Left lung (tissue), 14 donors: ENCODE measurements at regions of chr14 and their contacts with region 1.

Region 1: DNA sequence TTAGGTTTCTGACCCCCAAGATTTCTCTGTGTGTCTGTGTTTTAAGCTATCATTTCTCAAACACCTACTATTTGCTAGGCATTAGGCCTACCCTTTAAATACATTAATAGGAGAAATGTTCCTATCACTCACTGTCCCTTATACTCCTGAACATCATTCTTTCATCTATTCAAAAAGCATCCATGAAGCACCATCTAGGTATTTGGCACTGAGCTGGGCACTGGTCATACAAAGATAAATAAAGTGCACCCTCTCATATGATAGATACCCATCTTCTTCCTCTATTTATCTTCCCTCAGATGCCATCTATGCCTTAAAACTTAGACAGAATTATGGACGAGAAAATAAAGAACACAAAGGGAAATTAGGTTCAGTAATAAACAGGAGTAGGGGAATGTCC is 20.4 kb downstream of the SIX1 start:
- DNase-seq: no peak
- ATAC-seq: no peak
- H3K4me3 ChIP-seq: no peak overlapping the region
- H3K27ac ChIP-seq: no peak overlapping the region
- H3K4me1 ChIP-seq: peaks cover 0 to 3% of the 10 kb centered on the region in 2 donors
- H3K27me3 ChIP-seq: peaks cover 9 to 35% of the 10 kb centered on the region in 2 donors
- CTCF ChIP-seq: no peak

Region 2: GRCh38 chr14:60590991-60591414 is 37.9 kb before region 1 on chr14:
- intact Hi-C with region 1: no loop called
- DNase-seq: peak in 2 of 4 donors; percentile 3 to 24
- ATAC-seq: peak; percentile 82
- H3K4me3 ChIP-seq: no peak overlapping the region
- H3K27ac ChIP-seq: peak overlapping the region in 1 of 2 donors; percentile 26
- H3K4me1 ChIP-seq: peaks cover 0 to 8% of the 10 kb centered on the region in 2 donors
- H3K27me3 ChIP-seq: no peaks in the 10 kb centered on the region
- CTCF ChIP-seq: no peak

Region 3: DNA sequence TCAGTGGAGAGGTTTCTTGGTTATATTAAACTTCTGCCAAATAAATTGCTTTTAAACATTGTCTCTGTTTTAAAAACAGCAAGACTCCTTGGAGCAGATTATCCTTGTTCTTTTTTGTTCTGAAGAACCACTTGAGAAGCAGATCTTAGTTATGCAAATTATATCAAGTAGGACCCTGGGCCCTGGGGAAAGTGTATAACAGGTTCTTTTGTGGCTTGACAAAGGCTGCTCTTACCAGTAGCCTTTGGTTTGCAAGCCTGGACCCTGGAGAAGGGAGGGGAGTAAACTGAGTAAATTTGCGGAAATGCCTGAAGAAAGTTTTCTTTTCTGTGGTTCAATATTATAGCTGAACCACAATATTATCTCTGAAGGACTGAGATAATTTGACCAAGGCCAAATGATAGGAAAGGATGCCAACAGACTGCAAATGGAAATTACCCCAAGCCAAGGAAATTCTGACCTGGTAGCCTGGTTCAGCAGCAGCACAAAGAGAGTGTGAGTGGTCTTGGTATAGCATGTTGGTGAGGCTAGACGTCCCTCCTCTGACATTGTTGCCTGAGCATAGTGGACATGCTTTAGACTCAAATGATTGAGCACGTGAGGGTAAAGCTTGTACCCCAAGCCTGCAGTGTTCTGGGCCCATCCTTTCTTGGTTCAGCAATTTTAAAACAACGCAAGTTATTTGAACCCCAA is 50.8 kb after region 1 on chr14:
- intact Hi-C with region 1: no loop called
- DNase-seq: no peak
- ATAC-seq: no peak
- H3K4me3 ChIP-seq: no peak overlapping the region
- H3K27ac ChIP-seq: no peak overlapping the region
- H3K4me1 ChIP-seq: no peaks in the 10 kb centered on the region
- H3K27me3 ChIP-seq: no peaks in the 10 kb centered on the region
- CTCF ChIP-seq: no peak

Region 4: DNA sequence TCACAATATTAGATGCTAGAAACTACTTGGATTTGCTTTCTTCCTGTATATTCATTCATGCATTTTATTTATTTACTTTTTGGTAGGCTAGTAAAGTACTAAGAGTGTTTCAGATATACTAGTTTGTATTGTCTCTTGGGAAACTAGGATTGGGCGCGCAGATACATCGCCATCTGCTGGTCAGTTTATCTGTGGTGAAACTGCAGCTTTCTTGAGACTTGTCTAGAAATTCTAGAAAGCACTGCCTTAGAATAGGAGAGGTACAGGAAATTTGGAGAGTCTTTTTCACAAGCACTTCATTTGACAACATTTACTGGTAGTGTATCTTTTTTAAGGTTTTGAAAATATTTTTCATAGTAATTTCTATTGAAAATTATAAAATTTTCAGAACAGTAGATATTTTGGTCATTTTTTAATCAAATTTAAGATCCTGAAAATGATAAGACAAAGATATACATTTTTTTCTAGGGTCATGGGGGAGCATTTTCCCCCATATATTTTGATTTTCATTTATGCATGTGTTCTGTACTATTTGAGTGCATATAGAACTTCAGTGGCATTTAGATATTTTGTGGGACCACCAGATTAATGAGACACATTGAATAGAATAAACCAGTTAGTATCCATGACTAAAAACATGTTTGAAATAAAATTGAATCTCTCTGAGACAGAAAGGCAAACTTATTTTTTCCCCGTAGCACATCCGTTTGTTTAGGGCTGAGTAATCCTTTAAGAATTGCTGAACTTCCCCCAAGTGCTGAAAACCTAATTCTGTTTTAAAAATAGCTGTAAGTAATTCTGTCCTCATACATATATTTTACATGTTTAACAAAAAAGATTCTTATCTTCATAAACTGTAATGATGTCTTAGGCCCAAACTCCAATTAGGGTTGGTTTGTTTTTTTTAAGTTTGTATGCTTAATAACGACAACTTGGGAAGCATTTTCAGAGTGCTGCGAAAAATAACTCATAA is 396.6 kb after region 1 on chr14:
- intact Hi-C with region 1: loop called in 1 of 2 experiments (anchors 5 kb)
- DNase-seq: peak in 3 of 4 donors; percentile 44 to 78 (median 56)
- ATAC-seq: peak; percentile 93
- H3K4me3 ChIP-seq: no peak overlapping the region
- H3K27ac ChIP-seq: peak overlapping the region in 1 of 2 donors; percentile 14
- H3K4me1 ChIP-seq: peaks cover 8 to 12% of the 10 kb centered on the region in 2 donors
- H3K27me3 ChIP-seq: no peaks in the 10 kb centered on the region
- CTCF ChIP-seq: peak; percentile 79 to 80